ENCODE measurements at regions of chr11 and their contacts with region 1.

Region 1: GRCh38 chr11:44787981-44788380 is 61.2 kb downstream of the TSPAN18 start:
- DNase-seq: no peak
- H3K4me3 Mint-ChIP-seq: no peak overlapping the region
- H3K27ac Mint-ChIP-seq: no peak overlapping the region
- H3K4me1 Mint-ChIP-seq: no peaks in the 10 kb centered on the region
- H3K27me3 Mint-ChIP-seq: peaks cover 84% of the 10 kb centered on the region
- CTCF ChIP-seq: no peak

Region 2: GRCh38 chr11:44713022-44713421 is 75.0 kb before region 1 on chr11:
- CTCF ChIA-PET with region 1: interaction called, 10 read pairs
- intact Hi-C with region 1: no loop called
- DNase-seq: no peak
- H3K4me3 Mint-ChIP-seq: no peak overlapping the region
- H3K27ac Mint-ChIP-seq: no peak overlapping the region
- H3K4me1 Mint-ChIP-seq: peaks cover 15% of the 10 kb centered on the region
- H3K27me3 Mint-ChIP-seq: peaks cover 82% of the 10 kb centered on the region
- CTCF ChIP-seq: no peak

Region 3: GRCh38 chr11:44852159-44852747 is 64.3 kb after region 1 on chr11:
- CTCF ChIA-PET with region 1: no interaction called
- intact Hi-C with region 1: no loop called
- DNase-seq: no peak
- H3K4me3 Mint-ChIP-seq: no peak overlapping the region
- H3K27ac Mint-ChIP-seq: peak overlapping the region; percentile 75
- H3K4me1 Mint-ChIP-seq: peaks cover 27% of the 10 kb centered on the region
- H3K27me3 Mint-ChIP-seq: peaks cover 37% of the 10 kb centered on the region
- CTCF ChIP-seq: no peak

Region 4: GRCh38 chr11:44979543-44980399 is 191.8 kb after region 1 on chr11:
- CTCF ChIA-PET with region 1: no interaction called
- intact Hi-C with region 1: no loop called
- DNase-seq: peak; percentile 87
- H3K4me3 Mint-ChIP-seq: no peak overlapping the region
- H3K27ac Mint-ChIP-seq: no peak overlapping the region
- H3K4me1 Mint-ChIP-seq: no peaks in the 10 kb centered on the region
- H3K27me3 Mint-ChIP-seq: no peaks in the 10 kb centered on the region
- CTCF ChIP-seq: no peak

Region 5: GRCh38 chr11:45238724-45239123 is 450.7 kb after region 1 on chr11:
- CTCF ChIA-PET with region 1: no interaction called
- intact Hi-C with region 1: no loop called
- DNase-seq: no peak
- H3K4me3 Mint-ChIP-seq: no peak overlapping the region
- H3K27ac Mint-ChIP-seq: no peak overlapping the region
- H3K4me1 Mint-ChIP-seq: no peaks in the 10 kb centered on the region
- H3K27me3 Mint-ChIP-seq: peaks cover 31% of the 10 kb centered on the region
- CTCF ChIP-seq: no peak